Aorta (tissue), 5 donors: ENCODE measurements at regions of chr5 and their contacts with region 1.

Region 1: DNA sequence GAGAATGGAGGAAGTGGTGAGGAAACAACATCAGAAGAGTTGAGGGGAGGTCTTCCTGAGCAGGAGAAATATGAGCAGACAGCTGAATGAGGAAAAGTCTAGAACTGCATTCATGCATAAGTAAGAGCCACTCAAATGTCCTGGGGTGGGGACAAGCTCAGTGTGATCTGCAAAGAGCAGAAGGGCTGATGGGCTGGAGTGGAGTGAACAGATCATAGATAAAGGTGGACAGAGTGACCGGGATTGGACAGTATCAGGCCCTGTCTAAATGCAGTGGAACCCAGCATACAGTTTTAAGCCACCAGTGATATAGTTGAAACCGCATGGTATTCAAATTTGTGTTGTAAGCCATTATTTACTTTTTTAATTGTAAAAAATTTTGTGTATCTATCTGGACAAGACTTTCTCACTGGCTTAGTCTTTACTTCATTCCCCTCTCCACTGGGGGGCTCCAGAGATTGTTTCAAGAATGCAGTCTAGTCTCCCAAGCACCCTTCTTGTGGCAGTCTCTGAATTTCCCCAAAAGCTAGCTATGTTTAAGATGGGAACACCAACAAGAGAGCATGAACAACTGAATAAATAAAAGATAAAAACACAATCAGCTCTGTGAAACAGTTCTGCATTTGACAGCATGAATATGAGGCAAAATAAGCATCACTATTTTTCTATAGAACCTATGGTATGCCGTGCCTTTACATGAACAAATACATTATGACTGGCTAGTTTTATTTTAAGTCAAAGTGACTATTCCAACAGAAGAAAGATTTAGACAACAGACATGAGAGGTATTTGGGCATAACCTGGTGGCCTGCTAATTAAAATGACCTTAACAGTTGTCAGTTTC is 10.7 kb upstream of the STK32A start:
- DNase-seq: no peak
- ATAC-seq: peak; percentile 81
- H3K4me3 ChIP-seq: no peak overlapping the region
- H3K27ac ChIP-seq: no peak overlapping the region
- H3K4me1 ChIP-seq: no peaks in the 10 kb centered on the region
- H3K27me3 ChIP-seq: no peaks in the 10 kb centered on the region

Region 2: GRCh38 chr5:146744068-146744745 is 480.0 kb before region 1 on chr5:
- intact Hi-C with region 1: no loop called
- DNase-seq: no peak
- ATAC-seq: no peak
- H3K4me3 ChIP-seq: no peak overlapping the region
- H3K27ac ChIP-seq: no peak overlapping the region
- H3K4me1 ChIP-seq: peaks cover 0 to 2% of the 10 kb centered on the region in 2 donors
- H3K27me3 ChIP-seq: no peaks in the 10 kb centered on the region

Region 3: DNA sequence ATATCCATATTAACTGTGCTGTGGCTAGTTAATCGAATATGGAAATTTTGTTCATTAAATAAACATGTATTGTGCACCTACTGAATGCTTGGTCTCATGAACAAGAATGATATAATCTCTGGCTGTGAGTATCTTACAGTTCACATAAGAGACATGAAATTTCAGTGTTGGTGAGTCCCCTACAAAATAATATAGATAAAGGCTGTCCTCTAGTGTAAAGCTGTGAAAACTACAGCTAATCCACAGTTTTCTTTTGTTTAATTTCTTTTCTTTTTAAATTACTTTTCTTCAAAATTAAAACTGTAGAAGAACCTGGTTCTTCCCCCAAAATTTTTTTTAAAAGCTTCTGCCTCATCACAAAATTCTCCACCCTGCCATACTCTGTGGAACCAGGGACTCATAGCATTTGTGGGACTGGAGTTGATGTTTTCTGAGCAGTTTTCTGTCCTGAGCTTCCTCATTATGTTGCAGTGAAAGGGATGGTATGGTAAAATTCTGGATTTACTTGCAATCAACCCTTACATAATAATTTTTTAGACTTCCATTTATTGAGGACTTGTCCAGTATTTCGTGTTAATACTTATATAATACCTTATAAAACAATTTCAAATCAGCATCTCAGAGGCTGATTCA is 145.7 kb after region 1 on chr5:
- intact Hi-C with region 1: loop called (anchors 2 to 5 kb)
- DNase-seq: no peak
- ATAC-seq: peak; percentile 64
- H3K4me3 ChIP-seq: peak overlapping the region in 1 of 2 donors; percentile 48
- H3K27ac ChIP-seq: no peak overlapping the region
- H3K4me1 ChIP-seq: no peaks in the 10 kb centered on the region
- H3K27me3 ChIP-seq: no peaks in the 10 kb centered on the region

Region 4: GRCh38 chr5:147453875-147454814 is 230.0 kb after region 1 on chr5:
- intact Hi-C with region 1: no loop called
- DNase-seq: peak; percentile 94 to 98
- ATAC-seq: peak; percentile 92
- H3K4me3 ChIP-seq: peak overlapping the region; percentile 90 to 94
- H3K27ac ChIP-seq: peak overlapping the region; percentile 91 to 95
- H3K4me1 ChIP-seq: peaks cover 2% of the 10 kb centered on the region in 2 donors
- H3K27me3 ChIP-seq: no peaks in the 10 kb centered on the region

Region 5: GRCh38 chr5:147576646-147577535 is 352.7 kb after region 1 on chr5:
- intact Hi-C with region 1: loop called (anchors 5 kb)
- DNase-seq: peak; percentile 66 to 90
- ATAC-seq: peak; percentile 86
- H3K4me3 ChIP-seq: no peak overlapping the region
- H3K27ac ChIP-seq: no peak overlapping the region
- H3K4me1 ChIP-seq: no peaks in the 10 kb centered on the region
- H3K27me3 ChIP-seq: no peaks in the 10 kb centered on the region